Activated naive CD4-positive, alpha-beta T cell treated with anti-CD3 and anti-CD28 coated beads, Interleukin-2, amount 10 ng/mL, durations not matched to agents 7 days and 5 days (primary cell): ENCODE measurements at regions of chr5 and their contacts with region 1.

Region 1: DNA sequence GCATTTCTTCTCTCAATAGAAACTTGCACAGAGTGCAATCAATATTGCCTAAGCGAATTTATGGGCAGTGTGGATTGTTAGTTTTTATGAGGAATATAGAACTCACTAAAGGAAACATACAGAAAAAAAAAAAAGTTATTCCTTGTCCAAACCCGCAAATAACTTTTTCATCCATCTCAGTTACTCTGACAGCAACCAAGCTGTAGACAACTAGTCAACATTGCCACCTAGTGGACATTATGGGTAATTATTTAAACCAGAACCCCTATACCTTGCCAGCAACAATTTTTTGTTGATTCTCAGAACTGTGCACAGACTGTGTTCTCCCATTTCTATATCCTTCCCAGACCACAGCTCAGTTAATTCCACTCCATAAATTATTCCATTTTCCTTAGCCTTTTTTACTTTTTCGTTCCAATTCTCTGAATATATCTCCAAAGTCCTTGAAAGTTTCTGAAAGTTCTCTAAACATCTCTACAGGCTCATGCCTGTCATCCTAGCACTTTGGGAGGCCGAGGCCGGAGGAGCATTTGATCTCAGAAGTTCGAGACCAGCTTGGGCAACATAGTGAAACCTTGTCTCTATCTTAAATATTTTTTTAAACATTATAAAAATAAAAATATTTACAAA is 2.6 kb upstream of the AFAP1L1 start:
- DNase-seq: no peak
- H3K4me3 Mint-ChIP-seq: no peak overlapping the region
- H3K27ac Mint-ChIP-seq: no peak overlapping the region
- H3K4me1 Mint-ChIP-seq: peaks cover 17% of the 10 kb centered on the region
- H3K27me3 Mint-ChIP-seq: peaks cover 76% of the 10 kb centered on the region

Region 2: GRCh38 chr5:149130121-149130919 is 138.7 kb before region 1 on chr5:
- CTCF ChIA-PET with region 1: interaction called, 144 read pairs
- DNase-seq: no peak
- H3K4me3 Mint-ChIP-seq: no peak overlapping the region
- H3K27ac Mint-ChIP-seq: no peak overlapping the region
- H3K4me1 Mint-ChIP-seq: no peaks in the 10 kb centered on the region
- H3K27me3 Mint-ChIP-seq: peaks cover 22% of the 10 kb centered on the region

Region 3: DNA sequence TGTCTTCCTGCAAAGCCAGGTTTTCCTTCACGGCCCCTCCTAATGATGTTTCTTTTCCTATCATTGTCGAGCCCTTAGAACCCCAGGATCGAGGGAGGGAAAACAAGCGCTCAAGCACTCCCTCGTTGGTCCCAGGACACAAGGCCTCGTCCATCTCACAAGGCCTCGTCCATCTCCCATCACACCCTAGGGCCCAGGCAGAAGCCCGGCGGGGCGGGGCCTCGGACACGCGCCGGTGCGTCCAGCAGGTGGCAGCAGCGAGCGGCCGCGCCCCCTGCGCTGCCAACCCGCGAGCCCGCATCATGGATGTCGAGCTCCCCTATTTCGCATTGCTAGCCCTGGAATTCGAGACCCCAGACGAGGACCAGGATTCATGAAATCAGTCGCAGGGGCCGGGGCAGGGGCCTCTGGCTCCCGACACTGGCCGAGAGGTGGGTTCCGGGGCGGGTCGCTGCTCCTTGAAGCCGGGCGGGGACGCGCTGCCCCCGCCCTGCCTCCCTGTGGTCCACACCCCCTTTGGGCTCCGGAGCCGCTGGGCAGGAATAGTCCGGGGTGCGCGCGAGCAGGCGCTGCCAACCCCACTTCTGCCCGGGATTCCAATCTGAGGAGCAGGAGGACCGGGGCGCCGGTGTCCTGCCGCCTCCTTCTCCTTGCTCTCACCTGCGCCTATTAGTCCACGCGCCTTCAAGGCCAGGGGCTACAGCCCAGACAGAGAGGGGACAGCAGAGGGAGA is 127.7 kb before region 1 on chr5 and contains the start of gene ABLIM3:
- CTCF ChIA-PET with region 1: interaction called, 144 read pairs
- DNase-seq: peak; percentile 66
- H3K4me3 Mint-ChIP-seq: peak within 1 kb of the TSS; percentile 12
- H3K27ac Mint-ChIP-seq: no peak within 1 kb of the TSS
- H3K4me1 Mint-ChIP-seq: no peaks in the 10 kb centered on the region
- H3K27me3 Mint-ChIP-seq: peaks cover 48% of the 10 kb centered on the region

Region 4: GRCh38 chr5:149240354-149240998 is 28.6 kb before region 1 on chr5:
- CTCF ChIA-PET with region 1: interaction called, 14 read pairs
- DNase-seq: peak; percentile 94
- H3K4me3 Mint-ChIP-seq: peak overlapping the region; percentile 4
- H3K27ac Mint-ChIP-seq: peak overlapping the region; percentile 91
- H3K4me1 Mint-ChIP-seq: peaks cover 44% of the 10 kb centered on the region
- H3K27me3 Mint-ChIP-seq: peaks cover 34% of the 10 kb centered on the region

Region 5: DNA sequence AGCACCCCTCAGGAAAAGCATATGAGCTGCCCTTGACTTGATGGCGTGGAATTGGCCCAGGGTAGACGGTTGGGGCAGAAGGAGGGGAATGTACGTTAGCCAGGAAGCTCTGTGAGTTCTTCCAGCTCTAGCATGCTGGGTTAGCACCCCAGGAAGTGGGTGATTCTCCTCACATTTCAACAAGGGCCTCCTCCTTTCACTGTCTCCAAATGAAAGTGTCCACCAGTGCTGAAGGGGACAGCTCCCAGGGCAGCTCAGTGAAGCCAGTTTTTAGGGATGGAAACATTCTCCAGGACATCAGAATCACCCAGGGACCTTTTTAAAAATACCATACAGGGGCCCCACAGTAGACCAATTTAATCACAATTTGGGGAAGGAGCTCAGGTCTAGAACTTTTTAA is 14.5 kb before region 1 on chr5:
- CTCF ChIA-PET with region 1: interaction called, 27 read pairs
- DNase-seq: peak; percentile 42
- H3K4me3 Mint-ChIP-seq: no peak overlapping the region
- H3K27ac Mint-ChIP-seq: no peak overlapping the region
- H3K4me1 Mint-ChIP-seq: no peaks in the 10 kb centered on the region
- H3K27me3 Mint-ChIP-seq: peaks cover 46% of the 10 kb centered on the region